ENCODE measurements at regions of chr12 and their contacts with region 1.

Region 1: DNA sequence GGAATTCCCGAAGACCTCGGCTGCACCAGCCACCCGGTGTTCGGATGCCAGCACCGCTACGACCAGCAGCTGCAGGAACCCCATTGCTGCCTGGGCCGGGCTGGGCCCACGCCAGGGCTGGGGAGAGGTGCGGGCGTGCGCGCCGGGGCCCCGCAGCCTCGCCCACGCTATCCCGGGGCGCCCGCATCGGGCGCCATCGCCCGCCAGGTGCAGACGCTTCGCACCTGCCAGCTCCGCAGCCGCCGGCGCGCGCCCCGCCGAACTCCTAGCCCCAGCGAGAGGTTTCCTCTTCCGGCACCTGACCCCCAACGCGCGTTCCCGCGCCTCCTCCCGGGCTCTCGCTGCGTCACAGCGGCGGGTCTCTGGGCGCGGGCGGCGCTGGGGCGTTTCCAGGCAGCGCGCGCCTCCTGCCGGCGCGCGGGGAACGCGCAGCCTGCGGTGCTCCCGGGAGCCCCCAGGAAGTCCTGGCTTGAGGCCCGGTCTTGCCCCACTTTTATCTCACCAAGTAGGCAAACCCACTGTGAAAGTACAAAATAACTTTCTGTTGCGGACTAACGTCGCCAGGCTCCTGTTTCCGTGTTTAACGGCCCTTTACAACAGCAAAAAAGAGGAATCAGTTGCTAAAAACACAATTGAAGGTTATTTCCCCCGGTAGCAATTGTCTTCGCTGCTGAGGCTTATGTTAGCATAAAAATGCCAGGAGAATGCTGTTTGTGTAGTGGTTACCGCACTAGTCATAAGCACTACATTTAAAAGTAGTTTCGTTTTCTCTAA is at the start of gene TM7SF3:
- DNase-seq: peak; percentile 96
- H3K4me3 Mint-ChIP-seq: peak within 1 kb of the TSS; percentile 90
- H3K27ac Mint-ChIP-seq: peak within 1 kb of the TSS; percentile 95
- H3K4me1 Mint-ChIP-seq: peaks cover 60% of the 10 kb centered on the region
- H3K27me3 Mint-ChIP-seq: no peaks in the 10 kb centered on the region
- total RNA-seq, gene TM7SF3: 33.6 to 35.7 TPM

Region 2: DNA sequence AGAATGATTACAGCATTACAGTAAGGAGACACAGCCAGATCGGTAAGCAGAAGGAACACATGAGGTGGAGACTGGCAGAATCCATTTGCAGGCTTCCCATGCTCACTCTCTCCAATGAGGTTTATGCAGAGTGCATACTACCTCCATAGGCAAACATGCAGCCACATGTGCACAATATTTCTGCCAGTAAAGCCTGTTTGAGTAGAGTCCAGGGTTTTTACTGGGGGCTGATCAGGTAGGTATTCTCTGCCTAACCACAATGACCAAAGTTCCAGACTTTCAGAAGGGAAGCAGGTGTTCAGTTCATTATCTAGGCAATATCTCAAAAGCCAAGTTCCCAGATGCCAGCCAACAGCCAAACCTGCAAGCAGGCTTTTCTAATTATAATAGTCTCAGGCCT is 107.6 kb before region 1 on chr12:
- CTCF ChIA-PET with region 1: no interaction called
- POLR2A ChIA-PET with region 1: no interaction called
- DNase-seq: no peak
- H3K4me3 Mint-ChIP-seq: no peak overlapping the region
- H3K27ac Mint-ChIP-seq: no peak overlapping the region
- H3K4me1 Mint-ChIP-seq: peaks cover 3% of the 10 kb centered on the region
- H3K27me3 Mint-ChIP-seq: no peaks in the 10 kb centered on the region

Region 3: DNA sequence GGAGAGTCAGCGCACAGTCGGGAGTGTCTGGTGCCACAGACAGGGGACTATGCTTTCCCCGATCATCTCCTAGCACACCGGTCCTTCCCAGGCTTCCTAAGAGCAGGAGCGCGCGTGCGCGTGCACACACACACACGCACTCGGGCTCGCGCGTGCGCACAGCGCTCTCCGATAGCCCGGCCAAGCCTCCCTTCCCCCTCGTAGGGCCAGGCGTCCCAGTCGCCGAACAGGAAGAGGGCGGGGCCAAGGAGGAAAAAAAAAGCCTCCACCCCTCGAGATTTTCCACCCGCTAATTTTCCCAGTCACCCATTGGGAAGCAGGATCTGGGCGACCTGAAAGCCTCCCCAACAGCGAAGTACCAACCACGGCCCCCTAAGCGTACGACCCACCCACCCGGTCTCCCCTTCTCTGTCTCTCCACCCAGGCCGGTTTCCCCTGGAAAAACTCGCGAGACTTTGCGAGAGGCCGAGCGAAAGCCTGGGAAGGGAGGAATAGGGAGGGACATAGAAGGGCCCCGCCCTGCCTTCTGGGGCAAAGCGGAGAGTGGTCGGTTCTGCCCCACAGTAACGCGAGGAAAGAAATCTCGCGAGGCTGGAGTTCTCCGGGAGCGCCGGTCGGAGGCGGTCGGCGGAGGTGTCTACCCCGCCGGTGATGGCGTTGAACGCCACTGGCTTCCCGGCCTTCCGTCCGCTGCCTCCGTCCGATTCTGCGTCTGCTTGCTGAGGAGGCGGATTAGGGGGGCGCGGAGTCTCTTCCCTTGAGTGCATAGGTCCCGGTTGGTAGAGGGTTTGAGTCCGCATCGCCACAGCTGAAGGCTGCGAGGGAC is 76.2 kb before region 1 on chr12 and contains the starts of genes FGFR1OP2 and INTS13:
- CTCF ChIA-PET with region 1: interaction called, 5 read pairs
- POLR2A ChIA-PET with region 1: interaction called, 10 read pairs
- DNase-seq: peak; percentile 98
- H3K4me3 Mint-ChIP-seq: peak within 1 kb of the TSS; percentile 94
- H3K27ac Mint-ChIP-seq: peak within 1 kb of the TSS; percentile 97
- H3K4me1 Mint-ChIP-seq: peaks cover 52% of the 10 kb centered on the region
- H3K27me3 Mint-ChIP-seq: no peaks in the 10 kb centered on the region
- total RNA-seq, gene FGFR1OP2: 85.7 to 87.5 TPM
- total RNA-seq, gene INTS13: 44.8 to 45.8 TPM

Region 4: GRCh38 chr12:27024291-27024690 is 10.0 kb after region 1 on chr12:
- CTCF ChIA-PET with region 1: interaction called, 31 read pairs
- POLR2A ChIA-PET with region 1: interaction called, 17 read pairs
- DNase-seq: no peak
- H3K4me3 Mint-ChIP-seq: no peak overlapping the region
- H3K27ac Mint-ChIP-seq: no peak overlapping the region
- H3K4me1 Mint-ChIP-seq: peaks cover 36% of the 10 kb centered on the region
- H3K27me3 Mint-ChIP-seq: peaks cover 2% of the 10 kb centered on the region

Measured in activated CD4-positive, alpha-beta memory T cell treated with anti-CD3 and anti-CD28 coated beads, Interleukin-2, amount 10 ng/mL, durations not matched to agents 7 days and 5 days (primary cell).